ENCODE measurements at regions of chr9 and their contacts with region 1.

Region 1: GRCh38 chr9:111386386-111386785 is 56.4 kb upstream of the OR2K2 start:
- DNase-seq: no peak
- H3K4me3 ChIP-seq: no peak overlapping the region
- H3K27ac ChIP-seq: no peak overlapping the region
- H3K4me1 ChIP-seq: no peaks in the 10 kb centered on the region
- H3K27me3 ChIP-seq: no peaks in the 10 kb centered on the region
- CTCF ChIP-seq: no peak

Region 2: GRCh38 chr9:111412280-111412679 is 25.9 kb after region 1 on chr9:
- intact Hi-C with region 1: no loop called
- DNase-seq: no peak
- H3K4me3 ChIP-seq: no peak overlapping the region
- H3K27ac ChIP-seq: no peak overlapping the region
- H3K4me1 ChIP-seq: no peaks in the 10 kb centered on the region
- H3K27me3 ChIP-seq: no peaks in the 10 kb centered on the region
- CTCF ChIP-seq: no peak

Region 3: DNA sequence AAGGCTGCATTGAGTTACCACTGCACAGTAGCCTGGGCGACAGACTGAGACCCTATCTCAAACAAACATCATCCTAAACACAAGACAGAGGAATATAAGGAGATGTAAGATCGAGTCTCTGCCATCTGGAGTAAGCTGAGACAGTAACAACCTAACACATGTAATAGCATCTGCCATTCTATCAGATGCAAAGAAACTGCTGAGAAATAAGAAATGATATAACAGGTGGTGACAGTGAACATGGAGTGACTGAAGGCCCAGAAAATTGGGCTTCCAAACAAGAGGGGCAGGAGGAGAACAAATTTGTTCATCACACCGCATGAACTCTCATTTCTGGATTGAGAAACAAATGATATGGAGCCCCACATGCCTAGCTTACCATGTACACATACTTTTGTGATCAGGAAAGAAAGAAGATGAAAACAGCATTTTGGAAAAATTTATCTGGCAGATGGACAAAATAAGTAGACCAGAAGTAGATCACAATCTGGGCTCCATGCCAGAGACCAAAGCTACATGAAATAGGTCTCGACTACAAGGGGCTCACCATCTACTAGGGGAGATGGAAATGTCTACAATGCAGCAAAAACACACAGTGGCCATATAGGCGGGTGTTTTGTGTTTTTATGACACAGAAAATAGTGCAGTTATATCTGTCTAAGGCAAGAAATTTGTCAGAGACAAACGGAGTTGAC is 52.3 kb after region 1 on chr9:
- intact Hi-C with region 1: loop called (anchors 10 kb)
- DNase-seq: no peak
- H3K4me3 ChIP-seq: no peak overlapping the region
- H3K27ac ChIP-seq: no peak overlapping the region
- H3K4me1 ChIP-seq: peaks cover 0 to 8% (median 0%) of the 10 kb centered on the region in 4 donors
- H3K27me3 ChIP-seq: no peaks in the 10 kb centered on the region
- CTCF ChIP-seq: no peak

Measured in tibial artery (tissue), 4 donors.